A549 (cell line): ENCODE measurements at regions of chr20 and their contacts with region 1.

Region 1: GRCh38 chr20:362271-363254 is 15.7 kb downstream of the NRSN2 start:
- DNase-seq: peak; percentile 94 to 98
- ATAC-seq: peak; percentile 84 to 85
- H3K4me3 ChIP-seq: peak overlapping the region; percentile 10; the same call in 1 of the 3 replicates
- H3K27ac ChIP-seq: peak overlapping the region; percentile 94 to 98
- H3K4me1 ChIP-seq: peaks cover 86% of the 10 kb centered on the region
- CTCF ChIP-seq: peak; percentile 66
- EP300 ChIP-seq: peak in 1 of 2 experiments; percentile 62; a peak in 1 of 5 replicates
- POLR2A ChIP-seq: no peak
- RAD21 ChIP-seq: peak; percentile 80 to 91

Region 2: DNA sequence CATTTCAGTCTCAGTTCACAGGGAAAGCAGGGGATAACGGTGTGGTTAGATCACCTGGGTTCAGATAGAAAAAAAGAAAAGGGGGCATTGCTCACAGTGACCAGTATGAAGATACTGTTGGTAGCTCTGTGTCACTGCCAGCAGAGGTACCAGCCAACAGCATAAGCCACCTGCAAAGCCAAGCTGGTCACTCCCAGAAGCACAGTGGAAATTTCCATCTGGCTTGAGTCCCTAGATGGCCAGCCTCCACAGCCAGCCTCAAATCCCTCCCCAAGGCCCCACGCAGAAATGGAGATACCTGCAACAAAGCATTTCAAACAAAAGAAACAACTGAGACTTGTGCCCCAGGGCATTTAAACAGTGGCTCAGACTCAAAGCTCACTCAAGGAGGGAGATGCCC is 193.7 kb before region 1 on chr20:
- CTCF ChIA-PET with region 1: no interaction called
- POLR2A ChIA-PET with region 1: no interaction called
- DNase-seq: no peak
- ATAC-seq: no peak
- H3K4me3 ChIP-seq: no peak overlapping the region
- H3K27ac ChIP-seq: no peak overlapping the region
- H3K4me1 ChIP-seq: no peaks in the 10 kb centered on the region
- CTCF ChIP-seq: no peak
- EP300 ChIP-seq: no peak
- POLR2A ChIP-seq: no peak
- RAD21 ChIP-seq: no peak

Region 3: GRCh38 chr20:199996-200395 is 162.6 kb before region 1 on chr20:
- CTCF ChIA-PET with region 1: no interaction called
- POLR2A ChIA-PET with region 1: no interaction called
- DNase-seq: no peak
- ATAC-seq: no peak
- H3K4me3 ChIP-seq: no peak overlapping the region
- H3K27ac ChIP-seq: no peak overlapping the region
- H3K4me1 ChIP-seq: no peaks in the 10 kb centered on the region
- CTCF ChIP-seq: no peak
- EP300 ChIP-seq: no peak
- POLR2A ChIP-seq: no peak
- RAD21 ChIP-seq: no peak

Region 4: GRCh38 chr20:381581-382290 is 19.2 kb after region 1 on chr20:
- CTCF ChIA-PET with region 1: interaction called, 175 read pairs
- POLR2A ChIA-PET with region 1: interaction called, 147 read pairs
- DNase-seq: peak; percentile 64 to 91
- ATAC-seq: peak; percentile 68 to 72
- H3K4me3 ChIP-seq: peak overlapping the region; percentile 93
- H3K27ac ChIP-seq: peak overlapping the region; percentile 94 to 98
- H3K4me1 ChIP-seq: peaks cover 65% of the 10 kb centered on the region
- CTCF ChIP-seq: no peak
- EP300 ChIP-seq: peak; percentile 33 to 40; a peak in 2 of 5 replicates
- POLR2A ChIP-seq: peak; percentile 41; the same call in 1 of the 2 replicates
- RAD21 ChIP-seq: peak in 1 of 2 experiments; percentile 43; a peak in 2 of 5 replicates

Region 5: GRCh38 chr20:401682-402495 is 39.3 kb after region 1 on chr20:
- CTCF ChIA-PET with region 1: interaction called, 46 read pairs
- POLR2A ChIA-PET with region 1: interaction called, 50 read pairs
- DNase-seq: peak; percentile 99 to 100
- ATAC-seq: peak; percentile 85 to 90
- H3K4me3 ChIP-seq: 0 out of 3 replicates have a peak overlapping the region, but pooled peaks have one; percentile 4
- H3K27ac ChIP-seq: peak overlapping the region; percentile 93 to 99
- H3K4me1 ChIP-seq: peaks cover 42% of the 10 kb centered on the region
- CTCF ChIP-seq: no peak
- EP300 ChIP-seq: peak; percentile 97 to 98; a peak in 4 of 5 replicates
- POLR2A ChIP-seq: no peak
- RAD21 ChIP-seq: peak in 1 of 2 experiments; percentile 9; a peak in 1 of 5 replicates

Region 6: DNA sequence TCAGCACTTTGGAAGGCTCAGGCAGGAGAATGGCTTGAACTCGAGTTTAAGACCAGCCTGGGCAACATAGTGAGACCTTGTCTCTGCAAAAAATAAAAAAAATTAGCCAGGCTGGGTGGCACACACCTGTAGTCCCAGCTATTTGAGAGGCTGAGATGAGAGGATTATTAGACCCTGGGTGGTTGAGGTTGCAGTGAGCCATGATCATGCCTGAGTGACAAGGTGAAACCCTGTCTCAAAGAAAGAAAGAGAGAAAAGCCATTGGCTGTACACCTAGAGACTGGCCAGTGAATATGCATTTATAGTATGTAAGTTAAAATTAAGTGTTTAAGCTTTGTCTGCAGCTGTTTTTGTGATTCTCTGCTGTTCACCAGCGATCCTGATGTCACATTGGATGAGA is 51.6 kb after region 1 on chr20:
- CTCF ChIA-PET with region 1: interaction called, 17 read pairs
- POLR2A ChIA-PET with region 1: interaction called, 3 read pairs
- DNase-seq: no peak
- ATAC-seq: no peak
- H3K4me3 ChIP-seq: no peak overlapping the region
- H3K27ac ChIP-seq: no peak overlapping the region
- H3K4me1 ChIP-seq: peaks cover 33% of the 10 kb centered on the region
- CTCF ChIP-seq: no peak
- EP300 ChIP-seq: no peak
- POLR2A ChIP-seq: no peak
- RAD21 ChIP-seq: no peak

Region 7: DNA sequence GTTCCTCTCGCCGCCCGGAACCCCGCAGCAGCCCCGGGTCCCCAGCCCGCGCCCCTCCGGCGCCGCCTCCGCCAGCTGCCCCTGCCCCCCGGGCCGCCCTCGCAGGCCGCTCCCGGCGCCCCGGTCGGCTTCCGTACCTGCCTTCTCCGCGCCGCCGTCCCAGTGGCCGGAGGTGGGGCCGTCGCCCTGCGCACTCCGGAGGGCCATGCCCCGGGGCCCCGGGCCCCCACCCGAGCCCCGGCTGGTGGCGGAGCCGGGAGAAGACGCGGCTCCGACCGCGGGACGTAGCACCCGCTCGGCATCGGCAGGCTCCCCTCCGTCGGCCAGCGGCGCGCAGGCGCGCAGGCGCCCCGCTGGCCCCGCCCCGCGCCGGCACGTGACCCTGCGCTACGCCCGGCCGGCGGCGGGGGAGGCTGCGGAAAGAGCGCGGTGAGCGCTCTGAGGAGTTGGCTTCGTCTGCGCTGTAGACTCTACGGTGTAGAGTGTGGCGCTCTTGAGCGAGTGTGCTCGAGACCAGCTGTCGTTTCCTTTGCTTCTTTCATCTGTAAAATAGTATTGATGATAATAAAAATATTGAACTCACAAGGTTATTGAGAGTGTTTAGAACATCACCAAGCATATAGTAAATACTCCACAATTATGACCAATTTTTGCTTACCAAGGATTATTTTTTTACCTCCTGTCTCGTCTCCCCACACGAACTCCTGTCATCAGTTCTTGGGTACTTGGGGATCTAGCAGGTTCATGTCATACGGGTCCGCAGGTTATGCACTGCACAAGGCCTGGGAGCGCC is 99.8 kb after region 1 on chr20 and contains the start of gene TBC1D20:
- CTCF ChIA-PET with region 1: interaction called, 7 read pairs
- POLR2A ChIA-PET with region 1: interaction called, 13 read pairs
- DNase-seq: peak; percentile 89 to 92
- ATAC-seq: peak; percentile 94 to 96
- H3K4me3 ChIP-seq: peak within 1 kb of the TSS; percentile 82
- H3K27ac ChIP-seq: peak within 1 kb of the TSS; percentile 91 to 92
- H3K4me1 ChIP-seq: peaks cover 25% of the 10 kb centered on the region
- CTCF ChIP-seq: peak; percentile 58
- EP300 ChIP-seq: no peak
- POLR2A ChIP-seq: peak; percentile 94
- RAD21 ChIP-seq: peak in 1 of 2 experiments; percentile 29; a peak in 1 of 5 replicates
- polyA plus RNA-seq, gene TBC1D20: 43.4 and 53.9 TPM in 2 replicates